Endothelial cell of umbilical vein (primary cell): ENCODE measurements at regions of chr12 and their contacts with region 1.

Region 1: GRCh38 chr12:124036674-124037109 is 63.7 kb downstream of the ZNF664 start:
- DNase-seq: peak; percentile 60
- H3K4me3 ChIP-seq: no peak overlapping the region
- H3K27ac ChIP-seq: no peak overlapping the region
- H3K4me1 ChIP-seq: peaks cover 6% of the 10 kb centered on the region
- H3K27me3 ChIP-seq: peaks cover 0 to 3% of the 10 kb centered on the region in 2 experiments
- CTCF ChIP-seq: peak; percentile 75 to 81
- POLR2A ChIP-seq: no peak

Region 2: GRCh38 chr12:123854918-123855317 is 181.8 kb before region 1 on chr12:
- CTCF ChIA-PET with region 1: no interaction called
- POLR2A ChIA-PET with region 1: no interaction called
- dilution Hi-C with region 1: no loop called
- intact Hi-C with region 1: no loop called
- DNase-seq: no peak
- H3K4me3 ChIP-seq: no peak overlapping the region
- H3K27ac ChIP-seq: no peak overlapping the region
- H3K4me1 ChIP-seq: no peaks in the 10 kb centered on the region
- H3K27me3 ChIP-seq: peaks cover 4 to 5% of the 10 kb centered on the region in 2 experiments
- CTCF ChIP-seq: no peak
- POLR2A ChIP-seq: no peak

Region 3: GRCh38 chr12:123905319-123905925 is 131.3 kb before region 1 on chr12:
- CTCF ChIA-PET with region 1: interaction called, 133 read pairs
- POLR2A ChIA-PET with region 1: no interaction called
- dilution Hi-C with region 1: no loop called
- intact Hi-C with region 1: loop called (anchors 1 kb)
- DNase-seq: peak; percentile 73
- H3K4me3 ChIP-seq: no peak overlapping the region
- H3K27ac ChIP-seq: no peak overlapping the region
- H3K4me1 ChIP-seq: no peaks in the 10 kb centered on the region
- H3K27me3 ChIP-seq: peaks cover 3 to 8% of the 10 kb centered on the region in 2 experiments
- CTCF ChIP-seq: peak; percentile 66 to 73
- POLR2A ChIP-seq: no peak

Region 4: DNA sequence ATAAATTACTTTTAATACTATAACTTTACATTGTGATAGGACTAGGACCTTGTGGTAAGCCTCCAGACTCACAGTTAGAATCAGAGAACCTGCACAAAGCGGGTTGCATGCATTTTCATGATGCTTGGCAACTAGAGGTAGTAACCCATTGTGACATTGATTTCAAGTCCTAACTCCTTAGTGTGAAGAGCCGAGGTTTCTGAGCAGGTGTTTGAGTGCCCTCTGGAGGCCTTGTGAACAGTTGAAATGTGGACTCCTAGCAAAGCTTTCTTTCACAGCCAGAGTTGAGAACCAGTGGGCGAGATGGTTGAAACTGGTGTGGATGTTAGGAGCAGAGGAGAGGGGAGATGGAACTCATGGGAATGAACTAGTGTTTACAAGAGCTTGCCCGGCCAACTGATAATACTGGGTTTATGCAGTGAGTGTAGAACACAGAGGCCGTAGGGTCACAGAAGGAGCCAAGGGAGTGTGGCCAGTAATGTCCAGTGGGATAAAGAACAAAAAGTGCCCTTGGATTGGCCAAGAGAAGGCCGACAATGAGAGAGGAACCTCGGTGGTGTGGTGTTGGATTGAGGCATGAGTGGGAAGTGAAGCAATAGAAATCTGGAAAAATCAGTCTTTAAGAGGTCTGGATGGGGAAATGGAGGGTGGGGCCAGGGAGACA is 52.7 kb before region 1 on chr12:
- CTCF ChIA-PET with region 1: interaction called, 10 read pairs
- POLR2A ChIA-PET with region 1: no interaction called
- dilution Hi-C with region 1: no loop called
- intact Hi-C with region 1: no loop called
- DNase-seq: peak; percentile 60
- H3K4me3 ChIP-seq: no peak overlapping the region
- H3K27ac ChIP-seq: no peak overlapping the region
- H3K4me1 ChIP-seq: no peaks in the 10 kb centered on the region
- H3K27me3 ChIP-seq: no peaks in the 10 kb centered on the region
- CTCF ChIP-seq: peak; percentile 56 to 62
- POLR2A ChIP-seq: no peak

Region 5: DNA sequence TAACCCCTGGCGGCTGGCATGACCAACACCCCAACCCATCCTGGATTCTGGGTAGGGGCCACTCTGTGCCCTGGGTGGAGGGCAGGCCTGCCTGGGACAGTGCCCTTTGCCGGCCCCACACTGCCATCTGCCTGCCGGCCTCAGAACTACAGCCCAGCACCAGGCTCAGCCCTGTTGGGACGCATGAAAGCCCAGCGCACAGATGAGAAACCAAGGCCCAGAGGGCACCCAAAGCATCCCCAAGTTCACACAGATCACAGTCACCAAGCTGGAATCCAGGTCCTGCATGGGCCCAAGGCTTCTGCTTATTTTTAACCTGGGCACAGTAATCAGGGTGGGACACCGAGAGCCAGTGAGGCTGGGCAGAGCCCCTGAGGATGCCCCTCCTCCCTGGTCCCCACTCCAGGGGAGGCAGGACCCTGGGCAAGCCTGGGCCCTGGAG is 284.4 kb after region 1 on chr12:
- CTCF ChIA-PET with region 1: interaction called, 70 read pairs
- POLR2A ChIA-PET with region 1: no interaction called
- dilution Hi-C with region 1: no loop called
- intact Hi-C with region 1: loop called (anchors 1 kb)
- DNase-seq: peak; percentile 59
- H3K4me3 ChIP-seq: no peak overlapping the region
- H3K27ac ChIP-seq: no peak overlapping the region
- H3K4me1 ChIP-seq: no peaks in the 10 kb centered on the region
- H3K27me3 ChIP-seq: no peaks in the 10 kb centered on the region
- CTCF ChIP-seq: peak; percentile 94 to 98
- POLR2A ChIP-seq: peak; percentile 36